ENCODE measurements at regions of chr18 and their contacts with region 1.

Region 1: DNA sequence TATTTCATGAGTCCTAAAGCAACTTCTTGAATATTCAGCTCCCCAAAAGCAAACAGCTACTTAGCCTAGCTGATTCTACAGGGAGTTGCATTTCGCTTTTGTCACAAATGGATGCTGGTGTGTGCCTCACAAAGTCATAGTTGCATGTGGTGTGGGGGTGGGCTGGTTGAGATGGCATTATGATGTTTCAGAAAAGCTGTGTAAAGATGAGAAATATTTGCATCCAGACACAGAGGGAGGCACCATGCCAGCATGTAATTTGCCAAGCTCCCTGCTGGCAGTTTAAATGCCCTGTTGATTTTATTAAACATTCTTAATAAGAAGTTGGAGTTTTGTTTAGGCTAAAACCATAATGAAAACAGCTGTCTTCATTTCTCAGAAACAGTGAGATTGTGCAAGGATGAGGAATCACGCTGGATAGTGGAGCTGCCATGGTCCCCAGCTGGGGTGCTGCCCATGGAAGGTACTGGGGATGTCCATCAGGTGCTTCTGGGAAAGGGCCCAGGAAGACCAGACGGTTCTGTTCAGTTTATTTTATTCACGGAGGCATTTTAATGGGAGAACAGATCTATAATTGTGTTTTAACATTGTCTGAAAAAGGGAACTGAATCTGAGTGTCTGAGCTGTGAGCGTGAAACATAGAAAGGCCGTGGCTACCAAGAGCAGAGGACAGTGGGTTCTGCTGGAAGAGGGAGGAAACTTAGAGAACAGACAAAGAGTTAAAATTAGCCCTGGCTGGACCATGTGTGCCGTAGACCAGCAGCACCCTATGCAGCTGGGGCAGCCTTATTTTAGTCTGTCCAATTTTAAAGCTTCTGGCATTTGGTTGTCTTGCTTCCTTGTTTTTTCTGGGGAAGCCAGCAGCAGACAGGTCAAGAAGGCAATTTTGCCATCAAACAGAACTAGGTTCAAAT is 177.1 kb downstream of the FAM210A start:
- DNase-seq: peak; percentile 49 to 72
- H3K4me3 ChIP-seq: no peak overlapping the region
- H3K27ac ChIP-seq: peak overlapping the region; percentile 3
- H3K4me1 ChIP-seq: peaks cover 24% of the 10 kb centered on the region
- H3K27me3 ChIP-seq: no peaks in the 10 kb centered on the region
- CTCF ChIP-seq: no peak
- POLR2A ChIP-seq: no peak

Region 2: GRCh38 chr18:13502585-13502984 is 46.6 kb before region 1 on chr18:
- intact Hi-C with region 1: no loop called
- DNase-seq: no peak
- H3K4me3 ChIP-seq: no peak overlapping the region
- H3K27ac ChIP-seq: no peak overlapping the region
- H3K4me1 ChIP-seq: peaks cover 31% of the 10 kb centered on the region
- H3K27me3 ChIP-seq: no peaks in the 10 kb centered on the region
- CTCF ChIP-seq: no peak
- POLR2A ChIP-seq: no peak

Region 3: DNA sequence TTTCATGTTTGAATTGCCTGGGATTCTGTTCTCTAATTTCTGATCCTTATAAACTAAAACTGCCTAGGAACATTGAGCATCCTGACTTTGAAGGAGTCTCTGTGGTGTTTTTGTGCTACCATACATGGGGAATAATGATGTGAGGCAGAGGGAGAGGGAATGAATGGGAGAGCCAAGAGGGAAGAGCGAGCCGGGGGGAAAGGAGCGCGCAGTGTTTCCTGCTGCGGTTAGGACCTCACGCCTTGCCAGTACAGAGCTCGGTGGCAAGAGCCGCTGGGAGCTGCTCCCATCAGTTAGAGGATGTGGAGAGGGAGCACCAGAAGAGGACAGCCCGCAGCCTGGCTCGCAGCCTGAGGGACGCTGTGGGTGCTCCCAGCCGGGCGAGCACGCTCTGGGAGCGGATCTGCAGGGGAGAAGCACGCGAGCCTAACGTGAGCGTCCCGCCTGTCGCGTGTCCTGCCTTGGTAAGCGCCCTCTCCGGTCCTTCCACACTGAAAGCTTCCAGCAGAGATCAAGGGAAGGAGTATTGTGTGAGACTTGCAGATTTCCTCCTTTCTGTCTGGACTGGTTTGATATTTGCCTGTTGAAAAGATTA is 62.5 kb after region 1 on chr18:
- intact Hi-C with region 1: loop called (anchors 10 kb)
- DNase-seq: peak in 1 of 2 donors; percentile 85
- H3K4me3 ChIP-seq: peak overlapping the region; percentile 37 to 40
- H3K27ac ChIP-seq: peak overlapping the region; percentile 74
- H3K4me1 ChIP-seq: peaks cover 29% of the 10 kb centered on the region
- H3K27me3 ChIP-seq: no peaks in the 10 kb centered on the region
- CTCF ChIP-seq: no peak
- POLR2A ChIP-seq: no peak